Activated T-helper 1 cell treated with anti-CD3 and anti-CD28 coated beads, Interleukin-12 subunit alpha, Interleukin-12 subunit beta, Interleukin-2, Interleukin-4 antibody, amounts not matched to agents 30 ng/mL and 10 ng/mL and 1 ng/mL, durations not matched to agents 14 hours and 24 hours and 36 hours (primary cell): ENCODE measurements at regions of chr5 and their contacts with region 1.

Region 1: DNA sequence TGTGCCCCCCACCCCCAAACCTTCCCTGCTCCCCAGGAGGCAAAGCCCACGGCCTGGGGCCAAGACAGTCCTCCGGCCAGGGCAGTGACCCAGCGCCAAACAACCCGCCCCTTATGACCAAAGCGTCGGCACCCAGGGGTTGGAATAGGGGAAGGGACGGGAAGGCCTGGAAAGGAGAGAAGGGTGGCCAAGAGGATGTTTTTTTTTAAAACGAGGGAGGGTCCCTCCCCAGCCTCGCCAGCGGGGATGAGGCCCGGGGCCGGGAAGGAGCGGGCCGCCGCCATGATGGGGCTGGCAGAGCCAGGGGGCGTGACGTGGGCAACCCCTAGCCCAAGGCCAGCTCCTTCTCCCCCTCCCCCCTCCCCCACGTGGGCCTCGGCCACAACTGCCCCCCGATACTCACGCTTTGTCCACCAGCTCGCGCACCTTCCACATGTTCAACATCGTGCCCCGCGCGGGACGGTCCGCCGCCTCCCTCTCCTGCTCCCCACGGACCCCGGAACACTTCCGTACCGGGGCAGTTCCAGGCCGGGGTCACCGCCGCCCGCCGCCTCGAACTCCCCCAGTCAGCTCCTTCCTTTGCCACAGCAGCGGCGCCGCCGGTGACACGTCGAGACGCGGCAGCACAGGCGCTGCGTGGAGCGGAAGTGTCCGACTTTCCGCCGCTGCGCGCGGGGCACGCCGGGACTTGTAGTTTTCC is at the start of gene CLINT1:
- DNase-seq: peak; percentile 86
- H3K4me3 Mint-ChIP-seq: peak within 1 kb of the TSS; percentile 90
- H3K27ac Mint-ChIP-seq: peak within 1 kb of the TSS; percentile 92
- H3K4me1 Mint-ChIP-seq: peaks cover 71% of the 10 kb centered on the region
- H3K27me3 Mint-ChIP-seq: no peaks in the 10 kb centered on the region
- total RNA-seq, gene CLINT1: 90.5 and 93.1 TPM in 2 replicates

Region 2: GRCh38 chr5:157116483-157116954 is 742.2 kb before region 1 on chr5:
- intact Hi-C with region 1: no loop called
- DNase-seq: no peak
- H3K4me3 Mint-ChIP-seq: peak overlapping the region; percentile 6
- H3K27ac Mint-ChIP-seq: peak overlapping the region; percentile 61
- H3K4me1 Mint-ChIP-seq: peaks cover 40% of the 10 kb centered on the region
- H3K27me3 Mint-ChIP-seq: no peaks in the 10 kb centered on the region

Region 3: GRCh38 chr5:157350939-157351801 is 507.5 kb before region 1 on chr5:
- intact Hi-C with region 1: loop called (anchors 2 kb)
- DNase-seq: no peak
- H3K4me3 Mint-ChIP-seq: peak overlapping the region; percentile 25
- H3K27ac Mint-ChIP-seq: peak overlapping the region; percentile 89
- H3K4me1 Mint-ChIP-seq: peaks cover 55% of the 10 kb centered on the region
- H3K27me3 Mint-ChIP-seq: no peaks in the 10 kb centered on the region

Region 4: DNA sequence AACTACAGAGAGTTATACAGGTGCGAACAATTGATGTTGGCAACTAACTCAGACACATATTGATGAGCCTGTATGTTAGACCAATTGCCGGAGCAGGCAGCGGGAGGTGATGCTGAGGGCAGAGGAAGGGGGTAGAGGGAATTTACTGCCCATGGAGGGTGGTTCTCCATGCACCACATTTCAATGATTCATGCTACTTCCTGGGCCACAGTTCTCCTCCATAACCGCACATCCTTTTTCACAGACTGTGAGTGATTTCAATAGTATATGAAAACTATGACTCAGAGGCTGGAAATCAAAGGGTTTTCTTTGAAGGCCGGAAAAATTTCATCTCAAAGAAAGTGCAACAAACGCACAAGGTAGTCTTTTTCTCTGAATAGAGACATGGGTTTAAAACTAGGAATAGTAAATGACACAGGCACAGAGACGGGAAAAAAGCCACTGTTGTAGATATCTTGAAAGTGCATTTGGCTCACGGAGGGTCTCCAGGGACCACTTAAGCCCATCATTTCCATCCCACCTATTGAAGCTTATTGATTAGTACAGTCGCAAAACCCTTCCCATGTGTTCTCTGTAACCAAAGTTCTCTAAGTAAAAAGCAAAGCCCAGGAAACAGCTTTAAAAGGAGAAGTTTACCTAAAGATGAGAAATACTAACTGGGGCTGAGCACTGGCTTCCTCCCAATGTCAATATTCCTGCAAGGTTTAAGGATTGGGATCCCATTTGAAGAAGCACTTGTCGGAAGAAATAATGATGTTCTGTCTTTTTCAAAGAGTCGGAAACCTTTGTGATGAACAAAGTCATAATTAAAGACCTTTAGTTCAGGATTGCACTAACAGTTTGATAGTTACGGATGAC is 255.1 kb before region 1 on chr5:
- intact Hi-C with region 1: loop called (anchors 2 kb)
- DNase-seq: peak; percentile 74
- H3K4me3 Mint-ChIP-seq: peak overlapping the region; percentile 59
- H3K27ac Mint-ChIP-seq: peak overlapping the region; percentile 88
- H3K4me1 Mint-ChIP-seq: peaks cover 79% of the 10 kb centered on the region
- H3K27me3 Mint-ChIP-seq: no peaks in the 10 kb centered on the region

Region 5: DNA sequence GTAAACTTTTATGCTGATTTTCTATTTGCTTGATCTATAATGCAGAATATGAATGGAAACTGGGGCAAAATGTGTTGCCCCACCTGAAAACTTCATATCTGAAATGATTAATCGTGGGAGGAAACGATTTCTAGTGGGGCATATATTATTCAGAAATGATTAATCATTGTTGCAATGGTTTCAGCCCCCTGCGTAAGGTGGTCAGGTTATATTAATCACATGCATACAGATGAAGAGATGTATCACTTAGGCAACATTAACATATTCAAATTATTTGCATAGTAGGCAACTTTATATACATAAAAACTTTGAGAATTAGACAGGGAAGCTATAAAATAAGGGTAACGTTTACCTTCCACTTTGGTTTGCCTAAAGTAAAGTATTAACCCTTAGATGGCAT is 65.4 kb before region 1 on chr5:
- intact Hi-C with region 1: no loop called
- DNase-seq: no peak
- H3K4me3 Mint-ChIP-seq: no peak overlapping the region
- H3K27ac Mint-ChIP-seq: no peak overlapping the region
- H3K4me1 Mint-ChIP-seq: no peaks in the 10 kb centered on the region
- H3K27me3 Mint-ChIP-seq: no peaks in the 10 kb centered on the region

Region 6: DNA sequence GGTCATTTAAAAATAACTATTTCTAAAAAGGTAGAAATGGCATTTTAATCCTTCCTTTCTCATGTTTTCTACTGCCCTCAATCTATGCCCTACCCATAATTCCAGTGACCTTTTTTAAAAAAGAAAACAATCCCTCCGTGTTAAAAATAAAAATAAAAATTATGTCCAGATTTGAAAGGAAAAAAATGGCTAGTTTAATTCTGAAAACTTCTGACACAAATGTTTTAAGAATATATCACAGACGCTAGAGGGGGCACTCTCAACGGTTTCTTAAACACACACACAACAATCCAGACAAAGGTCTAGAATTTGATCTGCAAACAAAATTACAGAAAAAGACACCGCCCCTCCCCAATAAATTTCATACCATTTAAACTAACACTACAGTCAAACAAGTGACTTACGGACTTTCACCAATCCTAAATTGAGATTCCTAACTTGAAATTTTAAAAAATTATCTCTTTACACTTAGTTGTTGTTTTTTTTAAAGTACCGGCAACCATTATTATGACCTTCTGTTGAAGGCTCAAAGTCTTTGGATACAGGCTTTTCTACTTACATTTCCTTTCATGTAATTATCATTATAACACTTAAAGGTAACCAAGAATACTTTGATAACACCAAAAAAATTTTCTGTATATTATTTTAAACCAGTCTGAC is 38.0 kb before region 1 on chr5:
- intact Hi-C with region 1: loop called (anchors 1 kb)
- DNase-seq: no peak
- H3K4me3 Mint-ChIP-seq: no peak overlapping the region
- H3K27ac Mint-ChIP-seq: no peak overlapping the region
- H3K4me1 Mint-ChIP-seq: peaks cover 25% of the 10 kb centered on the region
- H3K27me3 Mint-ChIP-seq: no peaks in the 10 kb centered on the region

Region 7: DNA sequence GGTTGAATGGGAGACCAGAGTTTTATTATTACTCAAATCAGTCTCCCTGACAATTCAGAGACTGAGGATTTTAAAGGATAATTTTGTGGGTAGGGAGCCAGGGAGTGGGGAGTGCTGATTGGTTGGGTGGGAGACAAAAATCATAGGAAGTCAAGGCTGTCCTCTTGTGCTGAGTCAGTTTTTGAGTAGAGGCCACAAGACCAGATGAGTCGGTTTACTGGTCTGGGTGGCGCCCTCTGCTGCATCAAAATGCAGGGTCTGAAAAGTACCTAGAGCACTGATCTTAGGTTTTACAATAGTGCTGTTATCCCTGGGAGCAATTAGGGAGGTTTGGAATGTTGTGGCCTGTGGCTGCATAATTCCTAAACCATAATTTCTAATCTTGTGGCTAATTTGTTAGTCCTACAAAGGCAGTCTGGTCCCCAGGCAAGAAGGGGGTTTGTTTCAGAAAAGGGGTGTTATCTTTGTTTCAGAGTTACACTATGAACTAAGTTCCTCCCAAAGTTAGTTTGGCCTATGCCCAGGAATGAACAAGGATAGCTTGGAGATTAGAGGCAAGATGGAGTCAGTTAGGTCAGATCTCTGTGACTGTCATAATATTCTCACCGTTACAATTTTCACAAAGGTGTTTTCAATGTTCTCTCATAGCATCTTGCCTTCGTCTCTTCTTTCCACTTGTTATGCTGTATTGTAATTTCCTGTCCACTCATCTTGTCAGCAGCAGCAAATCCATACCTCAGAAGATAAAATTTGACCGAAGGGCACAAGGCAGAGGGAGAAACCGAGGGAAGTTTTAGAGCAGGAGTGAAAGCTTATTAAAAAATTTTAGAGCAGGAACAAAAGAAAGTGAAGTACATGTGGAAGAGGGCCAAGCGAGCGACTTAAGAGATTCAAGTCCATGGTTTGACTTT is 59.5 kb after region 1 on chr5:
- intact Hi-C with region 1: loop called (anchors 1 kb)
- DNase-seq: peak; percentile 33
- H3K4me3 Mint-ChIP-seq: no peak overlapping the region
- H3K27ac Mint-ChIP-seq: no peak overlapping the region
- H3K4me1 Mint-ChIP-seq: peaks cover 30% of the 10 kb centered on the region
- H3K27me3 Mint-ChIP-seq: no peaks in the 10 kb centered on the region

Region 8: DNA sequence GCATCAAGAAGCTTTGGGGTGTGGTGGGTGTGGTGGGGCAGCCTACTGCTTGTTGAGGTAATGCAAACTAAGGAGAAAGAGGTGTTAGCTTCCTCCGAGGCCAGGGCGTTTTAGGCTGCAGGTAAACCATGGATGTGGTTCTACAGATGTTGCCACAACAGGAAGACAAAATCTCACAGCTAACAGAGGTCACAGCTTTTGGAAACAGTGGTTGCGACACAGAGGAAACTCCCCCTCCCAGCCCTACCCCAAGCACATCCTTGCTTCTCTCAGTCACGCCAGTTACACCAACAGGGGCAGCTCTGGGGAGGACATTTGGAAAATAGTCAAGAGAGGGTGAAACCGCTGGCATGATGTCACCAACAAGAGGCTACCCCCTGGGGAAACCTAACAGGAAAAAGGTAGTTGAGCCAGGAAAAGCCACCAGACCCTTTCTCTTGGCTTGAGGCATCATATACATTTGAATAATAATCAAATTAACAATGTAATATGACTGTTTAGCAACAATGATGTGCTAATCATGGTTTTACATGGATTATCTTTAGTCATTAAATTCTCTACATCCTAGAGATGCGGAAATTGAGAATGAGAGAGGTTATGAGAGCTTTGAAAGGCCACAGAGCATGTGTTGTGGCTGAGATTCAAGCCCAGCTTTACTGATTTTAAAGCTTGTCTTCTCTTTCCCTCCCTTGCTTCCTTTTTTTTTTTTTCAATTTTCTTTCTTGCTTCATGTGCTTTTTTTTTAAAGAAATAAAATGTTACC is 1553.8 kb after region 1 on chr5:
- intact Hi-C with region 1: loop called (anchors 2 kb)
- DNase-seq: peak; percentile 81
- H3K4me3 Mint-ChIP-seq: peak overlapping the region; percentile 47
- H3K27ac Mint-ChIP-seq: peak overlapping the region; percentile 80
- H3K4me1 Mint-ChIP-seq: peaks cover 64% of the 10 kb centered on the region
- H3K27me3 Mint-ChIP-seq: peaks cover 13% of the 10 kb centered on the region